ENCODE measurements at regions of chr9 and their contacts with region 1.

Region 1: GRCh38 chr9:24500761-24501160 is 44.9 kb downstream of the IZUMO3 start:
- DNase-seq: no peak
- ATAC-seq: no peak
- H3K4me3 ChIP-seq: no peak overlapping the region
- H3K27ac ChIP-seq: no peak overlapping the region
- H3K4me1 ChIP-seq: no peaks in the 10 kb centered on the region
- H3K27me3 ChIP-seq: no peaks in the 10 kb centered on the region
- CTCF ChIP-seq: no peak
- POLR2A ChIP-seq: no peak

Region 2: DNA sequence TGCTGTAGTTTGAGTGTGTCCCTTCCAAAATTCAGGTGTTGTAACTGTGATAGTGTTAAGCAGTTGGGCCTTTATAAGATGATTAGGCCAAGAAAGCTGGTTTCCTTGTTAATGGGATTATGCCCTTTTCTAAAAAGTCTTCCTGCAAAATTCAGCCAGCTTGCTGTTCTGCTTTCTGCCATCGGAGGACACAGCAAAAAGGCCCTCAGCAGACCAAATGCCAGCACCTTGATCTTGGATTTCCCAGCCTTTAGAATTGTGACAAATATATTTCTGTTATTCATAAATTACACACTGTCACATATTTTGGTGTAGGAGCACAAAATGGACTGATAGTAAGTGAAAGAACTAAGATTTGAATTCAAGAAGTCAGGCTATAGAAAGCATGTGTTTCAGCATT is 158.3 kb before region 1 on chr9:
- intact Hi-C with region 1: no loop called
- DNase-seq: no peak
- ATAC-seq: no peak
- H3K4me3 ChIP-seq: no peak overlapping the region
- H3K27ac ChIP-seq: no peak overlapping the region
- H3K4me1 ChIP-seq: no peaks in the 10 kb centered on the region
- H3K27me3 ChIP-seq: no peaks in the 10 kb centered on the region
- CTCF ChIP-seq: no peak
- POLR2A ChIP-seq: no peak

Region 3: GRCh38 chr9:24398466-24398865 is 102.3 kb before region 1 on chr9:
- intact Hi-C with region 1: no loop called
- DNase-seq: no peak
- ATAC-seq: no peak
- H3K4me3 ChIP-seq: no peak overlapping the region
- H3K27ac ChIP-seq: no peak overlapping the region
- H3K4me1 ChIP-seq: no peaks in the 10 kb centered on the region
- H3K27me3 ChIP-seq: no peaks in the 10 kb centered on the region
- CTCF ChIP-seq: no peak
- POLR2A ChIP-seq: no peak

Region 4: DNA sequence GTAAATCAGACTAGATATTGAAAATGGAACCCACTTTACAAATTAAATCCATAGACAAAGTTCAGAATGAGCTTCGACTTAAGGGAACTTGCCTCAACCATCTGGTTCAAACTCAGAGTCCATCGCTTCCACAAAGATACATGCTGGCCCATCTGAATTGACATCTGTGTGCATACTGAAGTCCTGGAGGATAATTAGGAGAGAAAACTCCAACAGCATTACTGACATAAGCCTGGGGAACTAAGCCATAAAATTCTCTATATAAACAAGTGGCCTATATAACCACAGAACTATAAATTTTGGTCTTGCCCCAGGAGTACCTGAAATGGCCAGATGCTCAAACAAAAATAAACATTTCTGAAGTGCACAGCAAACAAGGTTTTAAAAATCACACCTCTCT is 49.4 kb before region 1 on chr9:
- intact Hi-C with region 1: no loop called
- DNase-seq: no peak
- ATAC-seq: no peak
- H3K4me3 ChIP-seq: no peak overlapping the region
- H3K27ac ChIP-seq: no peak overlapping the region
- H3K4me1 ChIP-seq: no peaks in the 10 kb centered on the region
- H3K27me3 ChIP-seq: no peaks in the 10 kb centered on the region
- CTCF ChIP-seq: no peak
- POLR2A ChIP-seq: no peak

Region 5: GRCh38 chr9:24516463-24516862 is 15.7 kb after region 1 on chr9:
- intact Hi-C with region 1: loop called in 1 of 10 experiments (anchors 2 kb)
- DNase-seq: no peak
- ATAC-seq: no peak
- H3K4me3 ChIP-seq: no peak overlapping the region
- H3K27ac ChIP-seq: no peak overlapping the region
- H3K4me1 ChIP-seq: no peaks in the 10 kb centered on the region
- H3K27me3 ChIP-seq: no peaks in the 10 kb centered on the region
- CTCF ChIP-seq: no peak
- POLR2A ChIP-seq: no peak

Region 6: GRCh38 chr9:24561957-24562356 is 61.2 kb after region 1 on chr9:
- intact Hi-C with region 1: no loop called
- DNase-seq: no peak
- ATAC-seq: no peak
- H3K4me3 ChIP-seq: no peak overlapping the region
- H3K27ac ChIP-seq: no peak overlapping the region
- H3K4me1 ChIP-seq: no peaks in the 10 kb centered on the region
- H3K27me3 ChIP-seq: no peaks in the 10 kb centered on the region
- CTCF ChIP-seq: no peak
- POLR2A ChIP-seq: no peak